ENCODE measurements at regions of chr5 and their contacts with region 1.

Region 1: GRCh38 chr5:113081881-113082546 is 105.4 kb downstream of the DCP2 start:
- DNase-seq: no peak
- ATAC-seq: peak in 2 of 4 donors; percentile 37 to 50
- H3K4me3 ChIP-seq: no peak overlapping the region
- H3K27ac ChIP-seq: no peak overlapping the region
- H3K4me1 ChIP-seq: peaks cover 0 to 43% (median 20%) of the 10 kb centered on the region in 12 donors
- H3K27me3 ChIP-seq: no peaks in the 10 kb centered on the region
- CTCF ChIP-seq: no peak
- POLR2A ChIP-seq: no peak

Region 2: DNA sequence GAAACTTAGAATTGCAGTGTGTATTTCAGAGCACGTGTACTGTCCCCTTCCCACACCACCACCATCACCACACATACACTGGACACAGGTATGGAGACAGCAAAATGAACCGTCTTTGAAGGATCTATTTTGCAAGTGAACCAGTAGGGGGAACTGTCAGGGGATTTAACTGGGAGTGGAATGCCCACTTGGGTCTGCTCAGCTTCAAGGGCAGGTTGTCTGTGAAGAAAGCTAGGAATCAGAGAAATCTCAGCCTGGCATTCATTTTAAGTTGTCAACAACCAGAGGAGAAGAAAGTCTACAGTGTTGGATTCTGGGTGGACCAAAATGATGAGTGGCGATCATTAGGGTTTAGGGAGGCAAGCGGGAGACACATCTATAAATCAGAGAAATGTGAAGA is 41.6 kb after region 1 on chr5:
- intact Hi-C with region 1: loop called in 1 of 10 experiments (anchors 5 kb)
- DNase-seq: no peak
- ATAC-seq: peak in 2 of 4 donors; percentile 4 to 11
- H3K4me3 ChIP-seq: no peak overlapping the region
- H3K27ac ChIP-seq: no peak overlapping the region
- H3K4me1 ChIP-seq: peaks cover 4 to 70% (median 44%) of the 10 kb centered on the region in 12 donors
- H3K27me3 ChIP-seq: no peaks in the 10 kb centered on the region
- CTCF ChIP-seq: peak in 7 of 12 donors; percentile 10 to 37 (median 26)
- POLR2A ChIP-seq: no peak

Region 3: GRCh38 chr5:113156271-113156877 is 74.4 kb after region 1 on chr5:
- intact Hi-C with region 1: loop called in 1 of 10 experiments (anchors 5 kb)
- DNase-seq: no peak
- ATAC-seq: no peak
- H3K4me3 ChIP-seq: no peak overlapping the region
- H3K27ac ChIP-seq: no peak overlapping the region
- H3K4me1 ChIP-seq: peaks cover 0 to 32% (median 8%) of the 10 kb centered on the region in 12 donors
- H3K27me3 ChIP-seq: no peaks in the 10 kb centered on the region
- CTCF ChIP-seq: no peak
- POLR2A ChIP-seq: no peak

Region 4: GRCh38 chr5:113513384-113514288 is 431.6 kb after region 1 on chr5 and contains the start of gene YTHDC2:
- intact Hi-C with region 1: loop called in 1 of 10 experiments (anchors 10 kb)
- DNase-seq: peak; percentile 88 to 95 (median 91)
- ATAC-seq: peak; percentile 95 to 98 (median 98)
- H3K4me3 ChIP-seq: peak within 1 kb of the TSS; percentile 77 to 96 (median 82)
- H3K27ac ChIP-seq: peak within 1 kb of the TSS; percentile 70 to 97 (median 92)
- H3K4me1 ChIP-seq: peaks cover 0 to 37% (median 16%) of the 10 kb centered on the region in 12 donors
- H3K27me3 ChIP-seq: peaks cover 0 to 13% (median 0%) of the 10 kb centered on the region in 9 donors
- CTCF ChIP-seq: peak in 10 of 12 donors; percentile 8 to 58 (median 32)
- POLR2A ChIP-seq: peak in 1 of 2 donors; percentile 73
- total RNA-seq, gene YTHDC2: 9.4 to 19.8 (median 15.1) TPM

Measured in heart left ventricle (tissue), 16 donors.